ENCODE measurements at regions of chr2 and their contacts with region 1.

Region 1: DNA sequence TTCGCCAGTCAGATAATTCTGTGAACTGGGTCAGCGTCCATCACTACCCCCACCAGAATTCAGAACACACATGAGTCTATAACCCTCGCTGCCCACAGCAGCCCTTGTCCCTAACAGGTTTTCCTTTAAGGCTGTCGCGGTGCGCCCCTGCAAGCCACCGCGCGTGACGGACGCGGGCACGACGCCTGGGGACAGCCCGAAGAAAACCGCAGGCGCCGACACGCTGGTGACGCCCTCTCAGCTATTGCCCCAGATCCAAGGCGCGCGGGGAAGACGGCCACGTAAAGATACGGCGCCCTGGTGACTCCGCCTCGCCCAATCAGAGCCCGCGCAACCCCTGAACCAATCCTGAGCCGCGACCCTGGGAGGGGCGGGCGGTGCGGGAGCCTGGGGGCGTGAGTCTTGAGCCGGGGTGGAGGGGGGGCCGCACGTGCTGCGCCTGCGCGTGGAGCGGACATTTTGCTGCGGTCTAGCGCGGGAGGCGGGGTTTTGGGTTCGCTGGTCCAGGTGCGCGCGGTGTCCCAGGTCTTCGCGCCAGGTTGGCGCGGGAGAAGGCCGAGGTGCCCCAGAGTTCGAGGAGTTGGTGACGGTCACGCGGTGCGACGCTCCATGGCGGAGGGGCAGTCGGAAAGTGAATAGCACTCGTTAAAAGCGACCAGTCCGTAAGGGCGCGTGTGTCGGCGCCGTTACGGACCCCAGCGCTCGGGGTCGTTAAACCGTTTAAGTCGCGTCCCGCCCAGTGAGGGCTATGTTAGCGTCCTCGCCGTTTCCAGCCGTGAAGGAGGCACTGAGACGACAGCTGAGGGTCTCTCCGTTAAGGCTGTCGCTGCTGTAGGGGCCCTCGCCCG is 15.9 kb downstream of the NMUR1 start:
- DNase-seq: peak; percentile 98
- ATAC-seq: peak; percentile 100
- H3K4me3 Mint-ChIP-seq: peak overlapping the region; percentile 88
- H3K27ac Mint-ChIP-seq: peak overlapping the region; percentile 95
- H3K4me1 Mint-ChIP-seq: peaks cover 23% of the 10 kb centered on the region
- H3K27me3 Mint-ChIP-seq: peaks cover 12% of the 10 kb centered on the region

Region 2: GRCh38 chr2:231482806-231483391 is 31.4 kb before region 1 on chr2:
- CTCF ChIA-PET with region 1: interaction called, 33 read pairs
- POLR2A ChIA-PET with region 1: interaction called, 3 read pairs
- DNase-seq: peak; percentile 77
- ATAC-seq: peak; percentile 90
- H3K4me3 Mint-ChIP-seq: peak overlapping the region; percentile 75
- H3K27ac Mint-ChIP-seq: peak overlapping the region; percentile 88
- H3K4me1 Mint-ChIP-seq: peaks cover 20% of the 10 kb centered on the region
- H3K27me3 Mint-ChIP-seq: peaks cover 5% of the 10 kb centered on the region

Region 3: DNA sequence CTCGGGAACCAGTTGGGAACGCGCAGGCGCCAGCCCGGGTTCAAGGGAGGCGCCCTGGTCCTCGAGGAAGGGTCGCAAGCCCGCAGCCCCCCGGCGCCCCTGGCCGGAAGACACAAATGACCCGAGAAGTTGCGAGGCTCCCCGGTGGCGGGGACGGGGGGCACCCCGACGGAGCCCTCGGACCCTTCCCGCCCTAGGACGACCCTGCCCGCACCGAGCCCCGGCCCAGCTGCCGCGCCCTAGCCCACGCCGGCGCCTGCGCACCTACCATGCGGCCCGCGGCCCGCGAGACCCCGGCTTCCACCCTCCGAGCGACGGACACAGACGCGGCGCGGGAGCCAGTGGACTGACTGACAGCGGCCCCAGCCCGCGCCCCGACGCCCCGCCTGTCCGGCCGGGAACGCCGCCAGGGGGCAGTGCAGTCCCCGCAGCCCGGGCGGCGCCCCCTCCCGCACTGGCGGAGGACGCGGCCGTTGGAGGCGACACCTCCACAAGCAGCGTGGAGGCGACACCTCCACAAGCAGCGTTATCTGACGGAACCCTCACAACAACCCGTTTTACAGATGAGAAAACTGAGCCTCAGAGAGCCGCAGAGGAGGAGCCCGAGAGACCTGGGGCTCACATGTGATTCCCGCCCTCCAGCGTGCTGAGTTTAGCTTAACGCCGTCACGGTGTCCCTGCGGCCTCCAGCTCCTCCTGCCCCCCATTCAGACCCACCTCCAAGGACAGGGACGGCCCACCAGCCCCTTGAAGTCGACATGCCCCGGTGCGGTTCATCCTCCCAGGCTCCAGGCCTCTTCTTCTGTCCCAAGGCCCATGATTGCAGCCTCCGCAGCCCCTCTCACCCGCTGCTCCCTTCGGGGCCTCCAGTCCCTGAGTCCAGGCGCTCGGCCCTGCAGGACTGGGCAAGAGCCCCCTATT is 16.0 kb after region 1 on chr2 and contains the start of gene NMUR1:
- CTCF ChIA-PET with region 1: interaction called, 15 read pairs
- POLR2A ChIA-PET with region 1: no interaction called
- DNase-seq: peak; percentile 72
- ATAC-seq: peak; percentile 94
- H3K4me3 Mint-ChIP-seq: peak within 1 kb of the TSS; percentile 18
- H3K27ac Mint-ChIP-seq: peak within 1 kb of the TSS; percentile 43
- H3K4me1 Mint-ChIP-seq: peaks cover 27% of the 10 kb centered on the region
- H3K27me3 Mint-ChIP-seq: peaks cover 63% of the 10 kb centered on the region
- total RNA-seq, gene NMUR1: 0.95 to 0.99 TPM

Region 4: DNA sequence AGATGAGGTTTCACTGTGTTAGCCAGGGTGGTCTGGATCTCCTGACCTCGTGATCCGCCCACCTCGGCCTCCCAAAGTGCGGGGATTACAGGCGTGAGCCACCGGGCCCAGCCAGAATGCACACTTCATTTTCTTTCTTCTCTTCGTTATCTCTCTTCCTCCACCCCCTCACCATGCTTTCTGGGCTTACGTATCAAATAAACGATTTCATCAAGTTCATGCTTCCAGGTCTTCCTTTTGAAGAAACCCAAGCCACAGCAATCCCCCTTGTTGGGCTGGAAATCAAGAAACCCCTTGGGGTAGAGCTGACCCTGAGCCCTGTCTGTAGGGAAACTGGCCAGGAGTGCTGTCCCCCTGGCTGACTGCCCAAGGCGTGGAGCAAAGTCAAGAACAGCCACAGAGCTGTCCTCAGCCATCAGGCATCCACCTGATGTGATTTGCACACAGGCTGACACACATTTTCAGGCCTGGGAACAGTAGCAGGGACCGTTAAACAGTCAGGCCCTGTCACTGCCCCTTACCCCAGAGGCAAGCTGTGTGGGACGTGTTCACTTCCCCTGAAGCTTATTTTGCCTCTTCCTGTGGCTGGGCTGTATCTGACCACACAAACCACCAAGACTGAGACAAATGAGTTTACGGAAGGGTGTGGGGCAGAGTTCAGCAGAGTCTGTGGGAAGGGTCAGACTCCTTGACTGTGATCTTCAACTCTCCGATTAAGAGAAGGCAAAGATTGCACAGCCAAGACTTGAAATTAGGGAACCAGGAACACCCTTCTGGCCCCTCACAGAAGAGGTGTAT is 31.0 kb after region 1 on chr2:
- CTCF ChIA-PET with region 1: interaction called, 13 read pairs
- POLR2A ChIA-PET with region 1: no interaction called
- DNase-seq: peak; percentile 88
- ATAC-seq: peak; percentile 92
- H3K4me3 Mint-ChIP-seq: peak overlapping the region; percentile 57
- H3K27ac Mint-ChIP-seq: peak overlapping the region; percentile 90
- H3K4me1 Mint-ChIP-seq: peaks cover 39% of the 10 kb centered on the region
- H3K27me3 Mint-ChIP-seq: peaks cover 18% of the 10 kb centered on the region

Region 5: DNA sequence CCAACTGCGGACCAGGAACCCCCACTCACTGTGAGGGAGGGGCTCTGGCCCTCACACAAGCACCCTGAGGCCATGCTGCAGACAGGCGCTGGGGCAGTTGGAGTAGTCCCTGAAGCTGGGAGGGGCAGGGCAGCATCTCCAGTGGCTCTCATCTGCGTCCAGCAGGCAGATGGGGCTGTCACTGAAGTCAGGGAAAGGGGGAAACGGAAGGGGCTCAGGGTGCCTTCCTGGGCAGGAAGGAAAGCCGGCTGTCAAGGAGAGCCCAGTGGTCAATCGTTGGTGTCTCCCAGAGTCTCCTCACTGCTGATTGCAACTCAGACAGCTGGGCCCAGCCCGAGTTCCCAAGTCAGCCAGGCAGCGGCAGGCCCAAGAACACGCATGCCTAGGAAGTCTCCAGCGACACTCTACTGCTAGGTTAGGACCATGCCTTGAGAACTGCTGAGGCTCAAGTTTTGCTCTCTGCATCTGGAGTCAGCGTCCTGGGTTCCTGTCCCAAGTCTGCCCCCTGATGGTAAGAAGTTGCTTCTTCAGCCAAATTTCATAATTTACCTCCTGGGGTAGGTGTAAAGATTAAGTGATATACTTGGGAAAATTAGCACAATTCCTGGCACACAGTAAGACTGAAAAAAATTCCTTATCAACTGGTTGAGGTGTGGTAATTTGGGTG is 43.4 kb after region 1 on chr2:
- CTCF ChIA-PET with region 1: interaction called, 26 read pairs
- POLR2A ChIA-PET with region 1: interaction called, 4 read pairs
- DNase-seq: peak; percentile 80
- ATAC-seq: peak; percentile 96
- H3K4me3 Mint-ChIP-seq: no peak overlapping the region
- H3K27ac Mint-ChIP-seq: peak overlapping the region; percentile 40
- H3K4me1 Mint-ChIP-seq: peaks cover 32% of the 10 kb centered on the region
- H3K27me3 Mint-ChIP-seq: peaks cover 6% of the 10 kb centered on the region

Region 6: DNA sequence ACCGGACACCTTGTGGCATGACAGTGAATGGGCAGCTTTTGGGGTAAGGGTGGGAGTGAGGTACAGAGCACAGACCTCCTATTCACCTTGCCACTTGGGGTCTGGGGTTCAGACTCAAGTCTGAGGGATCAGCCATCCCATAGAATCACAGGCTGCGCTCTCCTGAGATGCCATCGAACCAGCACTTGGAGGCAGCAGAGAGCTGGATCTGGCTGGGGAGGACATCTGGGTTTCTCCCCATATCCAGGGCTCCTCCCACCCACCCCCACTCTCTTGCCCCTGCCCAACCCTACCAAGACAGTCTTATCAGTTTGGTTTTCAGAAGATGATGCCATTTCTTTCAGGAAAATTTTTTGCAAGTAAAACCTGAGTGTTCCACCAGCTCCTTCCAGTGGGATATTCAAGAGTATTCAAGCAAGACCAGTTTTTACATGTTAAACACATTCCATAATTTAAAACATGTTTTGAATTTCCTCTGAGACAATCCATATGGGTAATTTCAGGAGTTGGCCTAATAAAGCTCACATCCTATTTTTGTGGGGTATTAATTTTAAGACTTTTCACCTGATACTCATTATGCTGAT is 49.1 kb after region 1 on chr2:
- CTCF ChIA-PET with region 1: interaction called, 21 read pairs
- POLR2A ChIA-PET with region 1: interaction called, 3 read pairs
- DNase-seq: peak; percentile 41
- ATAC-seq: peak; percentile 68
- H3K4me3 Mint-ChIP-seq: no peak overlapping the region
- H3K27ac Mint-ChIP-seq: no peak overlapping the region
- H3K4me1 Mint-ChIP-seq: peaks cover 2% of the 10 kb centered on the region
- H3K27me3 Mint-ChIP-seq: peaks cover 1% of the 10 kb centered on the region

Measured in activated CD8-positive, alpha-beta T cell treated with anti-CD3 and anti-CD28 coated beads, Interleukin-2, amount 10 ng/mL, durations not matched to agents 7 days and 5 days (primary cell).